ENCODE measurements at regions of chr17 and their contacts with region 1.

Region 1: DNA sequence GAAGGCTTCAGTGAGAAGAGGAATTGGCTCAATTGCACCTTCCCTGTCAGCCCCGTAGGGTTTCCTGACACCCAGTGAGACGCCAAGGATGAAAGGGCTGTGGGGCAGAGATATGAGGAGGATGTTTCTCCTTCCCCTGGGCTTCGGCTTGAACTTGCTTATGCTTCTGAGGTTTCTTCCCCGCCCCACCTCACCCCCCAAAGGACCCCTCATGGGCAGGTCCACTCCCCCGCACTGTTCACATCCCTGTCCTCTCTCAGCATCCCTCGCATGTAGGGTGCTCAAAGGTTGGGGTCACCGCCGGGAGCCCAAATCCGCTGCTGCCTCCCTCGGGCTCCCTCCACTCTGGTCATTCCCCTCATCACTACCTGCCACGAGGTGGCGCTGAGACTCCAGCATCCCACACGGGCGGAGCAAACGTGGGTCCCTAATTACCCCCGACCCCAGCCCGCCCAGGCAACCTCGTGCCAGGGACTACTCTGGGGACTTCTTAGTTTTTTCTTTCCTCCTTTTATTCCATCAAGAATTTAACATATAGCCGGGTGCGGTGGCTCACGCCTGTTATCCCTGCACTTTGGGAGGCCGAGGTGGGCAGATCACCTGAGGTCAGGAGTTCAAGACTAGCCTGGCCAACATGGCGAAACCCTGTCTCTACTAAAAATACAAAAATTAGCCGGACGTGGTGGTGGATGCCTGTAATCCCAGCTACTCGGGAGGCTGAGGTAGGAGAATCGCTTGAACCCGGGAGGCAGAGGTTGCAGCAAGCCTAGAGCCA is 3.3 kb upstream of the TRARG1 start:
- DNase-seq: peak; percentile 64
- H3K4me3 Mint-ChIP-seq: no peak overlapping the region
- H3K27ac Mint-ChIP-seq: no peak overlapping the region
- H3K4me1 Mint-ChIP-seq: no peaks in the 10 kb centered on the region
- H3K27me3 Mint-ChIP-seq: peaks cover 47% of the 10 kb centered on the region
- CTCF ChIP-seq: peak; percentile 67

Region 2: DNA sequence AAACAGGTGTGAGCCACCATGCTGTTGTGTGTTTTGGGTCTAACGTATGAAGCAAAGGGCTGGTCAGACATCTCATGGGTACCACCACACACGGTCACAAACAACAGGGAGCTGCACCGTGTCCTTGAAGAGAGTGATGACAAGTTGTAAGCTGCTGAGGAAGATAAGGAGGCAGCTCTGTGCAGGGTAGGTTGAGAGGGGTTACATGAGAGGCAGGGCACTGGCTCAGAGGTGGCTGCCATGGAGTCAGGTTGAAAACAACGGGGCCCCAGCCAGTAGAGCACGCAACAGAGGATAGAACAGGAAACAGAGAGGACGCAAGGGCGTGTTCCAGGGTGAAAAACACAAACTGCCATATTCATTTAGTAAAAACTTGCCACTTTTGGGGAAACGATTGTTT is 55.6 kb after region 1 on chr17:
- CTCF ChIA-PET with region 1: interaction called, 5 read pairs
- intact Hi-C with region 1: loop called (anchors 5 kb)
- DNase-seq: no peak
- H3K4me3 Mint-ChIP-seq: no peak overlapping the region
- H3K27ac Mint-ChIP-seq: no peak overlapping the region
- H3K4me1 Mint-ChIP-seq: no peaks in the 10 kb centered on the region
- H3K27me3 Mint-ChIP-seq: no peaks in the 10 kb centered on the region
- CTCF ChIP-seq: no peak

Region 3: DNA sequence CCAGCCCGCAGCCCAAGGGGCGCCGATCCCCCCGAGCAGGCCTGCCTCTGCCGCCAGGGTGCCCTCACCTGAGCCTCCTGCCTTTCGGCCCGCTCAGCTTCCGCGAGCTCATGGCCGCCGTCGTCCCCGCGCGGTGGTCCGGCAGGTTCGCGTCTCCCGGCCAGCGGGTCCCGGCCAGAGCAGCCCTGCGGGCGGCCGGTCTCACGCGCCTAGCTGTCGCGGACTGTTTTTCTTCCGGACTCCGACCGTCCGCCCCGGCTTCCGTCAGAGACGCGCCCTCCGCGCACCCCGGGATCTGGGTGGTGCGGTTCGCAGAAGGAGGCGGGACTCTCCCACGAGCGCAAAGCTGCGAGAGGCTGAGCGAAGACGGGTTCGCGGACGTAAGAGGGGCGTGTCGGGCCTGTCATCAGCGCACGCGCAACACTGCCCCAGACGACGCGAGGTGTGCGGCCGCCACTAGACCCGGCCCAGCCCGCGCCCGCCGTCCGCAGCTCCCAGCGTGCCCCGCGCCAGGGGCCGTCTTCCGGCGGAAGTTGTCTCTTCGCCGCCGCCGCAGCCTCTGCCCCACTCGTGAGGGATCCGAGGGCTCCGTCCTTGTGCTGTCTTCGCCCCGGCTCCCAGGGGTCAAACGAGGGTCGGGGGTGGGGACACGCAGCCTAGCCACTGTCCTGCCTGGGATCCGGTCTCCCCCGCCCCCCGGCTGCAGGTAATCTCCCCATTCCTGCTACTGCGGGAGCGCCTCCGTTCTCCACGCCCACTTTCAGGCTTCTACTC is 240.4 kb after region 1 on chr17 and contains the start of gene INPP5K:
- CTCF ChIA-PET with region 1: no interaction called
- intact Hi-C with region 1: loop called (anchors 2 kb)
- DNase-seq: peak; percentile 93
- H3K4me3 Mint-ChIP-seq: peak within 1 kb of the TSS; percentile 74
- H3K27ac Mint-ChIP-seq: peak within 1 kb of the TSS; percentile 64
- H3K4me1 Mint-ChIP-seq: no peaks in the 10 kb centered on the region
- H3K27me3 Mint-ChIP-seq: no peaks in the 10 kb centered on the region
- CTCF ChIP-seq: no peak
- total RNA-seq, gene INPP5K: 15.4 and 18.7 TPM in 2 replicates

Region 4: GRCh38 chr17:1648963-1649843 is 373.1 kb after region 1 on chr17:
- CTCF ChIA-PET with region 1: no interaction called
- intact Hi-C with region 1: no loop called
- DNase-seq: peak; percentile 88
- H3K4me3 Mint-ChIP-seq: peak overlapping the region; percentile 57
- H3K27ac Mint-ChIP-seq: no peak overlapping the region
- H3K4me1 Mint-ChIP-seq: no peaks in the 10 kb centered on the region
- H3K27me3 Mint-ChIP-seq: no peaks in the 10 kb centered on the region
- CTCF ChIP-seq: no peak

Measured in Calu3 (cell line).